ENCODE measurements at regions of chr1 and their contacts with region 1.

Region 1: DNA sequence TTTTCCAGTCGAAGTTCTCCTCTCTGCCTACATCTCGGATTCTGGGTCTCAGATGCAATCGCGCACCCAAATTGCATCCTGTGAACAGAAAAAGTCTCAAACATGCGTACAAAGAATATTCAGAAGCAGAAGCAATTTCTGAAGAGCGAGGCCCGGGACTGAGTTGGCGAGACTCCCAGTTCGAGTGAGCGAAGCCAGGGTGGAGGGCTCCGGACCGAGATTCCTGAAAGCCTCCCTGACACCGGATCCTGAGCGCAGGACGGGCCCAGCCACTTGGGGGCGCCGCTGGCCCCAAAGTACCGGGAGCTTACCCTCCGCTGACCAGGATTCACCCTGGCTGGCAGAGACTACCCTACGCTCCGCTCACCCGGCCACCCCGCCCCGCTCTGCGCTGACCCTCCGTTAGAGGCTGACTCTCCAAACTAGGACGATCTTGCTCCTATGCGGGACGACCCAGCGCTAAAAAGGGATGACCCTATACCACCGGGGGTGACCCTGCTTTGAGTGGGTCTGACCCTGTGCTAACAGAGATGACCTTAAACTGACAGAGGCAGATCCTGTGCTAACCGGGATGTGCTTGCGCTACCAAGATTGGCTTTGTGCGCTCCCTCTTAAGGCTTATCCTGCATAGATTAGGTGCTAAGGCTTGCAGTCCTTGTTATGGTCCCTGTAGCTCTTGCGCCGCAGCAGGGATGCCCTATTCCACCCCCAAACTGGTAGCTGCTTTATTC is 12.1 kb downstream of the FOXD2 start:
- DNase-seq: no peak
- ATAC-seq: no peak
- H3K4me3 Mint-ChIP-seq: no peak overlapping the region
- H3K27ac Mint-ChIP-seq: no peak overlapping the region
- H3K4me1 Mint-ChIP-seq: peaks cover 4% of the 10 kb centered on the region
- H3K27me3 Mint-ChIP-seq: peaks cover 53% of the 10 kb centered on the region

Region 2: DNA sequence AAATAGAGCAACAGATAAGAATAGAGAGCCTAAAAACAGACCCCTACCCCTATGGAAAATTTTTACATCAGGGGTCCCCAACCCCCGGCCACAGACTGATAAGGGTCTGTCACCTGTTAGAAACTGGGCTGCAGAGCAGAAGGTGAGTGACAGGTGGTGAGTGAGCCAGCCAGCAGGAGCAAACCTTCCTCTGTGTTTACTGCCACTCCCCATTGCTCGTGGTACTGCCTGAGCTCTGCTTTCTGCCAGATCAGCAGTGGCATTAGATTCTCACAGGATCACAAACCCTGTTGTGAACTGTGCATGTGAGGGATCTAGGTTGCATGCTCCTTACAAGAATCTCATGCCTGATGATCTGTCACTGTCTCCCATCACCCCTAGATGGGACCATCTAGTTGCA is 162.0 kb after region 1 on chr1:
- CTCF ChIA-PET with region 1: no interaction called
- DNase-seq: peak; percentile 0
- ATAC-seq: no peak
- H3K4me3 Mint-ChIP-seq: no peak overlapping the region
- H3K27ac Mint-ChIP-seq: no peak overlapping the region
- H3K4me1 Mint-ChIP-seq: no peaks in the 10 kb centered on the region
- H3K27me3 Mint-ChIP-seq: peaks cover 24% of the 10 kb centered on the region

Region 3: GRCh38 chr1:47710329-47711071 is 260.5 kb after region 1 on chr1:
- CTCF ChIA-PET with region 1: interaction called, 14 read pairs
- DNase-seq: peak; percentile 70
- ATAC-seq: peak; percentile 82
- H3K4me3 Mint-ChIP-seq: no peak overlapping the region
- H3K27ac Mint-ChIP-seq: no peak overlapping the region
- H3K4me1 Mint-ChIP-seq: peaks cover 5% of the 10 kb centered on the region
- H3K27me3 Mint-ChIP-seq: peaks cover 80% of the 10 kb centered on the region

Measured in activated CD8-positive, alpha-beta memory T cell treated with anti-CD3 and anti-CD28 coated beads, Interleukin-2, amount 10 ng/mL, durations not matched to agents 7 days and 5 days (primary cell).